ENCODE measurements at regions of chr4 and their contacts with region 1.

Region 1: GRCh38 chr4:184983672-184984356 is 34.5 kb upstream of the HELT start:
- DNase-seq: peak; percentile 90
- ATAC-seq: peak; percentile 97
- H3K4me3 Mint-ChIP-seq: no peak overlapping the region
- H3K27ac Mint-ChIP-seq: no peak overlapping the region
- H3K4me1 Mint-ChIP-seq: 0 out of 2 replicates have a peak, but pooled peaks cover 3% of the 10 kb centered on the region
- H3K27me3 Mint-ChIP-seq: peaks cover 6% of the 10 kb centered on the region
- CTCF ChIP-seq: no peak

Region 2: DNA sequence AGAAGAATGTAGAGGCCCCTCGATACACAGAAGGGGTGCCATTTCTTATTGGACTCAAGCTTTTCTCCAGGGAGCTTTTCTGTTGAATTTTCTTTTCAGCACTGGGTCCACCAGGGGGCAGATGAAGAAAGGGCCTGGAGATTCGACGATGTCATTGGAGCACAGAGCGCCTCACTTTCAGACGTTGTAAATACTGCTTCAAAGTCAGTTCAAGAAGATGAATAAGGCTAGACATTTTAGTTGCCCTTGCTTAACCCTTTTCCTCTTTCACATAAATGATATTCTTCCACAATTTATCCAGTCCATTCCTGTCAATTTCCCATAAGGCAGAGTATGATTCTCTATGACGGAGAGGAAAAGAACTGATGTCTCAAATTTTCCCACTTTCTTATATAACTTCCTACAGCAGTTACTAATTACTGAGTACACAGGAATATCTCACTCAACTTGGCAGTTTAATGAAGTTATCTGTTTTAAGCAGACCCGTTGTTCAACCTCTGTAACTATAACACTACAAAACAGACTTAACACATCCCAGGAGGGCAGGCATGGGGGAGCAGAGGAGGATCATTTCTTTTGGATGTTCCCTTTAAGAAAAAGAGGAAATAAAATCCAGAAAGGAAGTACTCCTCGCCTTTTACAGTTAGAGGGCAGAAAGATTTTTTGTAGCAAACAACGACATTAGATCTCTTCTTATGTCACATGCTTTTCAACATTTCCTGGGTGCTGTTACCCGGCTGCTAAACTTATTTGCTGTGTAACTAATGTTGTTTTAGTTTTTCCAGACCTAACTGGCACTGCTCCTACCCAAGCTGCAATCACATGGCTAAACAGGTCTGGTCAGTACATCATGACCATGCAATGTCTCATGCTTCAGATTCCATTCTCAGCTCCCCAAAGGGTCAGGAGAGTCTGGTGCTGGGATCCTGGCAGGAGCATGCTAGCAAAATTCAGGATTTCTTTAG is 237.7 kb before region 1 on chr4:
- CTCF ChIA-PET with region 1: interaction called, 29 read pairs
- POLR2A ChIA-PET with region 1: no interaction called
- DNase-seq: peak; percentile 64
- ATAC-seq: peak; percentile 31; the same call in 1 of the 2 replicates
- H3K4me3 Mint-ChIP-seq: no peak overlapping the region
- H3K27ac Mint-ChIP-seq: 0 out of 2 replicates have a peak overlapping the region, but pooled peaks have one; percentile 9
- H3K4me1 Mint-ChIP-seq: peaks cover 41% of the 10 kb centered on the region
- H3K27me3 Mint-ChIP-seq: peaks cover 7% of the 10 kb centered on the region; the same call in 1 of the 2 replicates
- CTCF ChIP-seq: peak; percentile 57

Measured in WTC11 (cell line).